Heart left ventricle (tissue), 16 donors: ENCODE measurements at regions of chr6 and their contacts with region 1.

Region 1: DNA sequence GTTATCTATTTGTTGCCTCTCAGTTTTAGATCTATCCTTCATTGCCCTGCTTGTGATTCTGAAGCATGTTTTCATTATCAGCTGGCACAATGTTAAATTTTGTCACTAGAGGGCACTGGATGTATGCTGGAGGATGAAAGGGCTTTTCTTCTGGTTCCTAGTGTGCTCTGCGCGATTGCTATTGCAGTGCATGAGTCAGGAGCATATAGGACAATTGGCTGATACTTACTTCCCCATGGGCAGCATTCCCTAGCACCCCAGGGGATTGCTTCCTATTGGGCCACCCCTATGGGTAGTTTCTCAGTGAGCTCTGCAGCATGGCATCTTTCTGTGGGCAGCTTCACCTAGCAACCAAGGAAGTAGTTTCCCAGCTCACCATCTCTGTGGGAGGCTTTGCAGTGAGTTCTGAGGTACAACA is 280.3 kb upstream of the SYNCRIP start:
- DNase-seq: no peak
- ATAC-seq: peak in 3 of 4 donors; percentile 59 to 82 (median 65)
- H3K4me3 ChIP-seq: no peak overlapping the region
- H3K27ac ChIP-seq: no peak overlapping the region
- H3K4me1 ChIP-seq: no peaks in the 10 kb centered on the region
- H3K27me3 ChIP-seq: no peaks in the 10 kb centered on the region
- CTCF ChIP-seq: peak; percentile 30 to 65 (median 48)
- POLR2A ChIP-seq: no peak

Region 2: GRCh38 chr6:85942844-85943243 is 19.8 kb after region 1 on chr6:
- intact Hi-C with region 1: no loop called
- DNase-seq: no peak
- ATAC-seq: no peak
- H3K4me3 ChIP-seq: no peak overlapping the region
- H3K27ac ChIP-seq: no peak overlapping the region
- H3K4me1 ChIP-seq: no peaks in the 10 kb centered on the region
- H3K27me3 ChIP-seq: no peaks in the 10 kb centered on the region
- CTCF ChIP-seq: no peak
- POLR2A ChIP-seq: no peak

Region 3: DNA sequence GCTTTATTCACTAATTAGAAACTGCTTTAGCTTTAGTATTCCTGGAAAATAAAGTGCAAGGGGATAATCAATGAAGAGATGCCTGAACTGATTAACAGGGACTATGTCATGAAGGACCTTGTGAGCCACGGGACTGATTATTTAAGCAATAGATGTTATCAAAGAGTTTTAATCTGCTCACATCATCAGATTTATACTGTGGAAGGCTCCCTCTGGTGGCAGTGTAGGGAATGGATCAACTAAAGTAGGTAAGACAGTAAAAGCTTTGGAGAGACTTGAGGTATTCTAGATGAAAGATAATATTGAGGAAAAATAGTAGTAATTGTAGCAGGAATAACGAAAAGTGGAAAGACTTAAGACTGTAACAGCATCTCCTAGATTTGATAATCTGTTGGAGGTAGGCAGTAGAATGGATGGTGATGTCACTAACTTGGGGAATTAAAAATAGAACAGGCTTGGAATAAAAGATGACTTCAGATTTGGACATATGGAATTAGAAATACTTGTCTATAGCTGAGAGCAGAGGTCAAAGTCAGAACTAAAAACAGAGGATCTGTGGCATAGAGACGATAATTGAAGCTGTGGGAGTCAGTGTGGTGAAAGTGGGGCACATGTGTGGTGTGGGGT is 934.0 kb after region 1 on chr6:
- intact Hi-C with region 1: loop called in 7 of 10 experiments (anchors 2 to 10 kb)
- DNase-seq: peak in 1 of 5 donors; percentile 26
- ATAC-seq: no peak
- H3K4me3 ChIP-seq: no peak overlapping the region
- H3K27ac ChIP-seq: no peak overlapping the region
- H3K4me1 ChIP-seq: no peaks in the 10 kb centered on the region
- H3K27me3 ChIP-seq: no peaks in the 10 kb centered on the region
- CTCF ChIP-seq: peak; percentile 49 to 74 (median 62)
- POLR2A ChIP-seq: no peak

Region 4: GRCh38 chr6:86937219-86938079 is 1014.4 kb after region 1 on chr6 and contains the start of gene HTR1E:
- intact Hi-C with region 1: loop called in 2 of 10 experiments (anchors 2 to 5 kb)
- DNase-seq: peak in 4 of 5 donors; percentile 11 to 42 (median 26)
- ATAC-seq: peak in 3 of 4 donors; percentile 58 to 68 (median 67)
- H3K4me3 ChIP-seq: peak within 1 kb of the TSS in 8 of 12 donors; percentile 5 to 33 (median 24)
- H3K27ac ChIP-seq: no peak within 1 kb of the TSS
- H3K4me1 ChIP-seq: peaks cover 0 to 12% (median 0%) of the 10 kb centered on the region in 12 donors
- H3K27me3 ChIP-seq: peaks cover 8 to 44% (median 31%) of the 10 kb centered on the region in 9 donors
- CTCF ChIP-seq: peak in 10 of 12 donors; percentile 26 to 60 (median 38)
- POLR2A ChIP-seq: no peak
- total RNA-seq, gene HTR1E: not detected

Region 5: DNA sequence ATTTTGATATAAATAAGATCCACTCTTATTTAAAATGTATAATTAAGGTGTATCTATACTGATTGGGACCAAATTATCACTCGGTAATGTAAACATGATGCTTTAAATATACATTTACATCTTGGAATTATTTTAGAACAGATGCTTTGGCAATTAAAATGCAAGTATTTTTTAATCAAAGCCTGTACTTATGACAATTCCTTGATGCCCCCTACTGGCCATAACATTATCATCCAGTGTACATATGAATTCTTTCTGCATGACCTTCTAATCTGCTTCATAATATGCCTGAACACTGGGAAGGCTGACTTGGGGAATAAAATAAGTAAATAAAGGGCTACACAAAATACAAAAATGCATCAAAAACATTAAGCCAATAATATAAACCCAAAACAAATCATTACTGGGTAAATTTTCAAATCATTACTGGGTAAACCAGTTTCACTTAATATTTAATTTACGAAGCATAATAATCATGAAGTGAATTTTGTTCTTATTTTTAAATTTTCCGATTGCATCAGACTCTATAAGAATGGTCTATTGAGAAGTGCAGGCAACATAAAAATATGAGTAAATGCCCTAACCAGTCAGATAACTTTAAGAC is 1106.8 kb after region 1 on chr6:
- intact Hi-C with region 1: loop called in 4 of 10 experiments (anchors 5 to 10 kb)
- DNase-seq: no peak
- ATAC-seq: no peak
- H3K4me3 ChIP-seq: no peak overlapping the region
- H3K27ac ChIP-seq: no peak overlapping the region
- H3K4me1 ChIP-seq: no peaks in the 10 kb centered on the region
- H3K27me3 ChIP-seq: no peaks in the 10 kb centered on the region
- CTCF ChIP-seq: peak; percentile 13 to 63 (median 42)
- POLR2A ChIP-seq: no peak